ENCODE measurements at regions of chr6 and their contacts with region 1.

Region 1: DNA sequence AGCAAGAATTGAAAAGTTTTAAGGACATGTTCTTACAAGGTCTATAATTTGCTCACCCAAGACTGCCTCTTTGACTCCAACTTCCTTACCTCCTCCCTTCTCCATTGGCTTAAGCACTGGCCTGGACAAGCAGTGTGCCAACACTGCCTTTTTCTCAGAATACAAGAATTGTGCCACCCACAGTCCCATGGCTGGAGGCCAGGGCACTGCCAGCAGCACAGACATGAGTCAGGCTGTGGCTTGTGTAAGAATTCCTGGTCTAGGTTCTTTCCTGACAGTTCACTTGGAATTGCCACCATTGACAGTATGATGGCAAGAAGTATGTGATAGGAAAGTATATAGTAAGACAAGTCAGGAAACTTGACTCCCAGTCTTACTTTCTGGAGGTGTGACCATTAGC is 202.7 kb upstream of the MARCKS start:
- DNase-seq: peak; percentile 88 to 96
- H3K4me3 ChIP-seq: no peak overlapping the region
- H3K27ac ChIP-seq: peak overlapping the region; percentile 16 to 35
- H3K4me1 ChIP-seq: peaks cover 0 to 3% of the 10 kb centered on the region in 2 donors
- H3K27me3 ChIP-seq: no peaks in the 10 kb centered on the region
- CTCF ChIP-seq: no peak

Region 2: DNA sequence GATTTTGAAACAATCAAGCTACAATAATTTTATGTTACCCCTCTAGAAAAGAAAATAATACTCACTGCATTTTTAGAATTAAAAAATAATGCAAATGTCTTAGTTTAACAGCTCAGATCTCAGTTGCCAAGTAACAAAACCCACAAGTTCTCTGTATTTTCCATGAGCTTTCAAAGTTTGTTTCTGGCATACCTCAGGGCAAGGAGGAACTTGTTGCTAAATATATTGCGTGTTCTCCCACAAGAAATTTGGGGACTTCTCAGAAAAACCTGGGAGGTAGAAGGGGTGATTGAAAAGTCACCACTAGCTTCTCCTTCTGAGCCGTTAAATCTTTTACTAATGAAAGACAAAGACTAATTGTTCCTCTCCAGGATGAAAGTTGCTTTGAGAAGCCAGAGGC is 34.0 kb before region 1 on chr6:
- intact Hi-C with region 1: no loop called
- DNase-seq: no peak
- H3K4me3 ChIP-seq: no peak overlapping the region
- H3K27ac ChIP-seq: no peak overlapping the region
- H3K4me1 ChIP-seq: no peaks in the 10 kb centered on the region
- H3K27me3 ChIP-seq: no peaks in the 10 kb centered on the region
- CTCF ChIP-seq: no peak

Region 3: DNA sequence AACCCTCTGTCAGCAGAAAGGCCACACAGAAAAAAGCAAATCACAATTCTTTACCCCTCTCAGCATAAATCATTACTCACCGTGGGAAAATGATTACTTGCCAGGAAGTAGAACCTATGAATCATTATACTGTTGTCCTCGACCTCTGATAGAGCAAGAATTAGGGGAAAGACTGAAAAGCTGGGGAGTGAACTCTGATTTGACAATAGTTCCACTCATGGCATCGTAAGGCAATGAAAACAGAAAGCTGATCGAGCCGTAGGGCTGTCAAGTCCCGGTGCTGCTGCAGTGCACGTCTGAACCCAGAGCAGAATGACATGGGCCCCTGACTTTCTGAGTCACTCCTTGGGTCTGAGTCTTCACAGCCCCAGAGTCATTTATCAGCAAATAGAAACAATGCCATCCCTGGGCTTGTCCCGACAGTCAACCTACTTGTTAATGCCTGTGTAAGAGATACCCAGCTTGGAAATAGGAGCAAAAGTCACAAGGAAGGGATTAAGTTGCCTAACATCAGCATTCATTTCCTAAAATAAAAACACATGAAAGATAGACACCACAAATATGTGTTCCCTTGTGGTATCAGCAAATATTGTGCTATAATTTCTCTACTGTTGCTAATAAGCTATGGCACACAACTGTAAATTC is 22.1 kb before region 1 on chr6:
- intact Hi-C with region 1: loop called (anchors 2 kb)
- DNase-seq: peak; percentile 31 to 68
- H3K4me3 ChIP-seq: peak overlapping the region in 1 of 2 donors; percentile 50
- H3K27ac ChIP-seq: peak overlapping the region; percentile 36 to 64
- H3K4me1 ChIP-seq: peaks cover 0 to 17% of the 10 kb centered on the region in 2 donors
- H3K27me3 ChIP-seq: no peaks in the 10 kb centered on the region
- CTCF ChIP-seq: no peak